Sigmoid colon (tissue), 7 donors: ENCODE measurements at regions of chr16 and their contacts with region 1.

Region 1: GRCh38 chr16:67613808-67614207 is 31.1 kb upstream of the CARMIL2 start:
- DNase-seq: peak; percentile 22
- H3K4me3 ChIP-seq: no peak overlapping the region
- H3K27ac ChIP-seq: no peak overlapping the region
- H3K4me1 ChIP-seq: no peaks in the 10 kb centered on the region
- H3K27me3 ChIP-seq: no peaks in the 10 kb centered on the region
- CTCF ChIP-seq: no peak
- EP300 ChIP-seq: no peak
- POLR2A ChIP-seq: no peak

Region 2: GRCh38 chr16:67781565-67781921 is 167.7 kb after region 1 on chr16:
- intact Hi-C with region 1: loop called (anchors 10 kb)
- DNase-seq: no peak
- H3K4me3 ChIP-seq: no peak overlapping the region
- H3K27ac ChIP-seq: no peak overlapping the region
- H3K4me1 ChIP-seq: no peaks in the 10 kb centered on the region
- H3K27me3 ChIP-seq: no peaks in the 10 kb centered on the region
- CTCF ChIP-seq: no peak
- EP300 ChIP-seq: no peak
- POLR2A ChIP-seq: no peak